Breast epithelium (tissue), 4 donors: ENCODE measurements at regions of chr5 and their contacts with region 1.

Region 1: GRCh38 chr5:82459626-82460025 is 181.5 kb upstream of the RPS23 start:
- DNase-seq: no peak
- H3K4me3 ChIP-seq: no peak overlapping the region
- H3K27ac ChIP-seq: no peak overlapping the region
- H3K4me1 ChIP-seq: no peaks in the 10 kb centered on the region
- H3K27me3 ChIP-seq: no peaks in the 10 kb centered on the region
- CTCF ChIP-seq: no peak
- POLR2A ChIP-seq: no peak

Region 2: GRCh38 chr5:81363093-81364080 is 1096.2 kb before region 1 on chr5:
- intact Hi-C with region 1: loop called (anchors 5 kb)
- DNase-seq: no peak
- H3K4me3 ChIP-seq: no peak overlapping the region
- H3K27ac ChIP-seq: no peak overlapping the region
- H3K4me1 ChIP-seq: no peaks in the 10 kb centered on the region
- H3K27me3 ChIP-seq: no peaks in the 10 kb centered on the region
- CTCF ChIP-seq: no peak
- POLR2A ChIP-seq: no peak

Region 3: GRCh38 chr5:82403026-82403425 is 56.6 kb before region 1 on chr5:
- intact Hi-C with region 1: loop called (anchors 2 kb)
- DNase-seq: no peak
- H3K4me3 ChIP-seq: no peak overlapping the region
- H3K27ac ChIP-seq: no peak overlapping the region
- H3K4me1 ChIP-seq: no peaks in the 10 kb centered on the region
- H3K27me3 ChIP-seq: no peaks in the 10 kb centered on the region
- CTCF ChIP-seq: no peak
- POLR2A ChIP-seq: no peak